Naive thymus-derived CD4-positive, alpha-beta T cell (primary cell): ENCODE measurements at regions of chr9 and their contacts with region 1.

Region 1: DNA sequence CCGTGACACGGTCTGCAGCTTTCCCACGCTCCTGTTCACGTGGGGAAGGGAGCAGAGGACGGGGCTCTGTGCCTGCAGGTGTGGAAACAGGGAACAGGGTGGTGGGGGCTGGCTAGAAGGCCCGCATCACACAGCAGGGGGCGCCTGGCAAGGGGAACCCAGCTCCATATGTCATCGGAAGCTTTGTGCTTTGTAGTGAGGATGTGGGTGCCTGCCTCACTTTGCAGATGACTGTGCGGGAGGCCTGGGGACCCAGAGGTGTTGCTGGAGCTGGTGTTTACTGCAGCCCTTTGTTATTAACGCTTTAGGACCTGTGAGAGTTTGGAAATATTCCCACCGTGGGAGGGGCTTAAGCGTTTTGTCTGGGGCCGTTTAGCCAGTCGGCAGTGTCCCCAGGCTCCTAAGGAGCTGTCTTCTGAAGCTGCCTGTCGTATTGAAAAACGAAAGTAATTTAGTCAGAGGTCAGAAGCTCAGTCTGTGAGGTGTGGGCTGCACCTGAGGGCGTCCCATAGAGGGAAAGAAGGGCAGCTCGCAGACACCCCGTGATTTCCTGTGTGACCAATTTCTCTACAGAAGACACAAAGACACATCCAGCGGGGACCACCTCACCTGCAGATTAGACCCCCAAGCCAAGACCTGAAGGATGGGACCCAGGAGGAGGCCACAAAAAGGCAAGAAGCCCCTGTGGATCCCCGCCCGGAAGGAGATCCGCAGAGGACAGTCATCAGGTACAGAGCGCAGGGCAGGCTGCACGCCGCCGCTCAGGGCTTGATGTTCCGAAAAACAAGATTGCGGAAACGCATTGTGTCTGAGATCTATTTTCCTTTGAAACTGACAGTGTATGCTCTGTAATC is 9.1 kb downstream of the MAN1B1 start:
- DNase-seq: peak; percentile 63 to 92 (median 89)
- ATAC-seq: peak; percentile 100
- H3K4me3 ChIP-seq: peak overlapping the region; percentile 63
- H3K4me3 Mint-ChIP-seq: peak overlapping the region; percentile 76 to 94 (median 86)
- H3K27ac ChIP-seq: peak overlapping the region; percentile 79
- H3K27ac Mint-ChIP-seq: peak overlapping the region; percentile 87 to 98 (median 95)
- H3K4me1 ChIP-seq: peaks cover 12 to 14% of the 10 kb centered on the region in 2 donors
- H3K4me1 Mint-ChIP-seq: peaks cover 9 to 28% (median 21%) of the 10 kb centered on the region in 7 donors
- H3K27me3 ChIP-seq: no peaks in the 10 kb centered on the region
- H3K27me3 Mint-ChIP-seq: no peaks in the 10 kb centered on the region

Region 2: DNA sequence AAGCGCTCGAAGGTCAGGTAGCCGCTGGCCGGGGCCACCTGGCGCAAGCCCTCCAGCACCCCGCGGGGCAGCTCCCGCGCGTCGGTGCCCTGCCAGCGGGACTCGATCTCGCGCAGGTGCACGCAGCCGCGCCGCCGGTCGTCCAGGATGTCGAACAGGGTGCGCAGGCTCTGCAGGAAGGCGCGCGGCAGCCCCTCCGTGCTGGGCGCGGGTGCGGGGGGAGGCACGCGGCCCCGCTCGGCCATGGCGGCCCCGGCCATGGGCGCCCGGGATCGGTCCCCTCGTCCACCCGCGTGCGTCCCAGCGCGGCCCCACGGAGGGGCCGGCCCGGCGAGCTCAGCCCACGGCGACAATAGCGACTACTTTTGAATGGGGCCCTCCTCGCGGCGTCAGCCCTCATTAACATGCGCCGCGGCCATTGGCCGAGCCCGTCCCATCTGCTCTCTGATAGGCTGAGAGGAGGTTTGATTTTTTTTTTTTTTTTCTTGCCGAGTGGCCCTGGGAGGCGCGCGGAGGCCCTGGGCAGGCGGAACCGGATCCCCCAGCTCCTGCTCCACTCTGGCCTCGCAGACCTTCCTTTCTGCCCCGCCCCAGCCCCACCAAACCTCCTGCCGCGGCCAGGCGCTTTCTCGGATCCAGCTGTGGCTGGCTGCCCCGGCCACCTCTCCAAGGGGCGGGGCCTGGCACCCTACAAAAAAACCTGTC is 25.5 kb before region 1 on chr9 and contains the start of gene SAPCD2:
- CTCF ChIA-PET with region 1: interaction called, 3 read pairs
- POLR2A ChIA-PET with region 1: interaction called, 6 read pairs
- intact Hi-C with region 1: loop called in 1 of 2 experiments (anchors 1 kb)
- DNase-seq: peak; percentile 72 to 88 (median 85)
- ATAC-seq: peak; percentile 94
- H3K4me3 ChIP-seq: peak within 1 kb of the TSS; percentile 27
- H3K4me3 Mint-ChIP-seq: peak within 1 kb of the TSS; percentile 66 to 92 (median 81)
- H3K27ac ChIP-seq: peak within 1 kb of the TSS; percentile 51
- H3K27ac Mint-ChIP-seq: peak within 1 kb of the TSS in 6 of 9 donors; percentile 40 to 86 (median 62)
- H3K4me1 ChIP-seq: peaks cover 11 to 15% of the 10 kb centered on the region in 2 donors
- H3K4me1 Mint-ChIP-seq: peaks cover 10 to 38% (median 12%) of the 10 kb centered on the region in 7 donors
- H3K27me3 ChIP-seq: no peaks in the 10 kb centered on the region
- H3K27me3 Mint-ChIP-seq: no peaks in the 10 kb centered on the region
- total RNA-seq, gene SAPCD2: 0.16 to 22.1 (median 0.74) TPM

Region 3: GRCh38 chr9:137077010-137077747 is 18.7 kb before region 1 on chr9 and contains the start of gene UAP1L1:
- CTCF ChIA-PET with region 1: no interaction called
- POLR2A ChIA-PET with region 1: interaction called, 6 read pairs
- intact Hi-C with region 1: loop called in 1 of 2 experiments (anchors 1 kb)
- DNase-seq: peak in 7 of 9 donors; percentile 29 to 71 (median 39)
- ATAC-seq: peak; percentile 81
- H3K4me3 ChIP-seq: peak within 1 kb of the TSS; percentile 47
- H3K4me3 Mint-ChIP-seq: peak within 1 kb of the TSS; percentile 53 to 83 (median 75)
- H3K27ac ChIP-seq: peak within 1 kb of the TSS; percentile 70
- H3K27ac Mint-ChIP-seq: peak within 1 kb of the TSS in 3 of 9 donors; percentile 28 to 38 (median 30)
- H3K4me1 ChIP-seq: peaks cover 6 to 8% of the 10 kb centered on the region in 2 donors
- H3K4me1 Mint-ChIP-seq: peaks cover 0 to 16% (median 0%) of the 10 kb centered on the region in 7 donors
- H3K27me3 ChIP-seq: no peaks in the 10 kb centered on the region
- H3K27me3 Mint-ChIP-seq: no peaks in the 10 kb centered on the region
- total RNA-seq, gene UAP1L1: 11.6 to 27.6 (median 15.2) TPM

Region 4: GRCh38 chr9:137114610-137115391 is 18.9 kb after region 1 on chr9 and contains the start of gene DPP7:
- CTCF ChIA-PET with region 1: interaction called, 11 read pairs
- POLR2A ChIA-PET with region 1: interaction called, 5 read pairs
- intact Hi-C with region 1: loop called (anchors 1 kb)
- DNase-seq: peak; percentile 63 to 88 (median 80)
- ATAC-seq: peak; percentile 93
- H3K4me3 ChIP-seq: peak within 1 kb of the TSS; percentile 54
- H3K4me3 Mint-ChIP-seq: peak within 1 kb of the TSS; percentile 38 to 82 (median 69)
- H3K27ac ChIP-seq: peak within 1 kb of the TSS; percentile 81
- H3K27ac Mint-ChIP-seq: peak within 1 kb of the TSS in 4 of 9 donors; percentile 24 to 78 (median 40)
- H3K4me1 ChIP-seq: peaks cover 0 to 4% of the 10 kb centered on the region in 2 donors
- H3K4me1 Mint-ChIP-seq: peaks cover 0 to 13% (median 6%) of the 10 kb centered on the region in 7 donors
- H3K27me3 ChIP-seq: no peaks in the 10 kb centered on the region
- H3K27me3 Mint-ChIP-seq: no peaks in the 10 kb centered on the region
- total RNA-seq, gene DPP7: 235 to 328 (median 298) TPM

Region 5: GRCh38 chr9:137129456-137130175 is 33.7 kb after region 1 on chr9:
- CTCF ChIA-PET with region 1: interaction called, 3 read pairs
- POLR2A ChIA-PET with region 1: interaction called, 10 read pairs
- intact Hi-C with region 1: loop called in 1 of 2 experiments (anchors 1 kb)
- DNase-seq: peak; percentile 74 to 93 (median 90)
- ATAC-seq: peak; percentile 98
- H3K4me3 ChIP-seq: peak overlapping the region; percentile 85
- H3K4me3 Mint-ChIP-seq: peak overlapping the region; percentile 83 to 93 (median 90)
- H3K27ac ChIP-seq: peak overlapping the region; percentile 85
- H3K27ac Mint-ChIP-seq: peak overlapping the region; percentile 67 to 88 (median 81)
- H3K4me1 ChIP-seq: peaks cover 21 to 28% of the 10 kb centered on the region in 2 donors
- H3K4me1 Mint-ChIP-seq: peaks cover 23 to 34% (median 27%) of the 10 kb centered on the region in 7 donors
- H3K27me3 ChIP-seq: no peaks in the 10 kb centered on the region
- H3K27me3 Mint-ChIP-seq: peaks cover 9 to 10% (median 9%) of the 10 kb centered on the region in 5 donors

Region 6: GRCh38 chr9:137156567-137157375 is 60.9 kb after region 1 on chr9:
- CTCF ChIA-PET with region 1: no interaction called
- POLR2A ChIA-PET with region 1: no interaction called
- intact Hi-C with region 1: no loop called
- DNase-seq: peak in 6 of 9 donors; percentile 27 to 77 (median 40)
- ATAC-seq: peak; percentile 88
- H3K4me3 ChIP-seq: peak overlapping the region; percentile 41
- H3K4me3 Mint-ChIP-seq: peak overlapping the region in 8 of 10 donors; percentile 27 to 78 (median 66)
- H3K27ac ChIP-seq: no peak overlapping the region
- H3K27ac Mint-ChIP-seq: no peak overlapping the region
- H3K4me1 ChIP-seq: peaks cover 0 to 16% of the 10 kb centered on the region in 2 donors
- H3K4me1 Mint-ChIP-seq: peaks cover 5 to 19% (median 11%) of the 10 kb centered on the region in 7 donors
- H3K27me3 ChIP-seq: peaks cover 4 to 24% of the 10 kb centered on the region in 2 donors
- H3K27me3 Mint-ChIP-seq: peaks cover 32 to 44% (median 38%) of the 10 kb centered on the region in 5 donors

Region 7: DNA sequence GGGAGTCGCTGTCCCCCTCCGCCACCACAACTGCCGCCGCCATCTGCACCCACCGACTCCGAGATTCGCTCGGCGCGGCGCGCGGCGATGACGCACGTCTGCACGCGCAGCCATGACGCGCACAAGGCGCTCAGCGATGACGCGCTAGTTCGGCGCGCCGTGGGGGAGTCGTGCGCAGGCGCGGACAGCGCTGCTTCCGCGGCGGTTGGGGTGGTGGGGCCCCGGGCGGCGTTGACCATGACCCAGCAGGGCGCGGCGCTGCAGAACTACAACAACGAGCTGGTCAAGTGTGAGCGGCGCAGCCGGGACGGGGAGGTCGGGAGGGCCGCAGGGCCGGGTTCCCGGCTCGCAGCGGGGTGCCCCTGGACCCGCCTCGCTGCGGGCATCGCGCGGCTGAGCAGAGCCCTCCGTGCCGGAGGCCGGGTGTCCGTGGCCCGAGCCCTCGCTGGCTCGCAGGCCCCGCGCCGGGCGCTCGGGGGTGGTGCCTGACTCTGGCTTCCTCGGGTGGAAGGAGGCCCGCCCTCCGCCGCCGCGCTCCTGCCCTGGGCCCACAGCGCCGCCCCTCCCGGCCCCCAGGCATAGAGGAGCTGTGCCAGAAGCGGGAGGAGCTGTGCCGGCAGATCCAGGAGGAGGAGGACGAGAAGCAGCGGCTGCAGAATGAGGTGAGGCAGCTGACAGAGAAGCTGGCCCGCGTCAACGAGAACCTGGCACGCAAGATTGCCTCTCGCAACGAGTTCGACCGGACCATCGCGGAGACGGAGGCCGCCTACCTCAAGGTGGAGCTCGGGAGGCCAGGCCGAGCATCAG is 92.8 kb after region 1 on chr9 and contains the starts of genes ANAPC2 and SSNA1:
- CTCF ChIA-PET with region 1: interaction called, 3 read pairs
- POLR2A ChIA-PET with region 1: interaction called, 5 read pairs
- intact Hi-C with region 1: loop called in 1 of 2 experiments (anchors 2 kb)
- DNase-seq: peak; percentile 86 to 99 (median 93)
- ATAC-seq: peak; percentile 91
- H3K4me3 ChIP-seq: peak within 1 kb of the TSS; percentile 98
- H3K4me3 Mint-ChIP-seq: peak within 1 kb of the TSS; percentile 91 to 99 (median 92)
- H3K27ac ChIP-seq: peak within 1 kb of the TSS; percentile 99
- H3K27ac Mint-ChIP-seq: peak within 1 kb of the TSS; percentile 85 to 96 (median 93)
- H3K4me1 ChIP-seq: peaks cover 30 to 32% of the 10 kb centered on the region in 2 donors
- H3K4me1 Mint-ChIP-seq: peaks cover 14 to 61% (median 32%) of the 10 kb centered on the region in 7 donors
- H3K27me3 ChIP-seq: no peaks in the 10 kb centered on the region
- H3K27me3 Mint-ChIP-seq: no peaks in the 10 kb centered on the region
- total RNA-seq, gene ANAPC2: 77.3 to 147 (median 134) TPM
- total RNA-seq, gene SSNA1: 37.9 to 75.6 (median 46.8) TPM

Region 8: DNA sequence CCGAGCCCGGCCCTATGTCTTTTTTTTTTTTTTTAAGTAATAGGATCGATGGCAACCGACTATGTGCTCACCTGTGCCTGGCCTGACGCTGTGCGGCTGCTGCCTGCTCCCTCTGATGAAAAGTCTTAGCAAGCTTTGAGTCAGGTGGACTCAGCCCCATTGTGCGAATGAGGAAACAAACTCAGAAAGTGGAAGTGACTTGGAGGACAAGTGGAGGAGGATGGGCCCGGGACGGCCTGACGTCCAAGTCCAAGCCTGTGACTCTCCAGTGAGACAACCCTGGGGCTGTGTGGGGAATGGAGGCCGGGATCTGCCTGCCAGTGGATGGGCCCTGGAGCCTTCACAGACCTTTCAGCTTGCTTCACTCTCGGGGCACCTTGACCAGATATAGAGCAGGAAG is 269.2 kb after region 1 on chr9:
- CTCF ChIA-PET with region 1: no interaction called
- POLR2A ChIA-PET with region 1: no interaction called
- intact Hi-C with region 1: no loop called
- DNase-seq: no peak
- ATAC-seq: peak; percentile 18
- H3K4me3 ChIP-seq: no peak overlapping the region
- H3K4me3 Mint-ChIP-seq: no peak overlapping the region
- H3K27ac ChIP-seq: no peak overlapping the region
- H3K27ac Mint-ChIP-seq: no peak overlapping the region
- H3K4me1 ChIP-seq: no peaks in the 10 kb centered on the region
- H3K4me1 Mint-ChIP-seq: peaks cover 0 to 5% (median 0%) of the 10 kb centered on the region in 7 donors
- H3K27me3 ChIP-seq: no peaks in the 10 kb centered on the region
- H3K27me3 Mint-ChIP-seq: peaks cover 0 to 3% (median 0%) of the 10 kb centered on the region in 5 donors